Heart left ventricle (tissue), 16 donors: ENCODE measurements at regions of chr9 and their contacts with region 1.

Region 1: GRCh38 chr9:744790-745484 is 96.6 kb upstream of the DMRT1 start:
- DNase-seq: peak; percentile 83 to 91 (median 86)
- ATAC-seq: peak; percentile 94 to 97 (median 96)
- H3K4me3 ChIP-seq: no peak overlapping the region
- H3K27ac ChIP-seq: peak overlapping the region; percentile 20 to 81 (median 72)
- H3K4me1 ChIP-seq: peaks cover 0 to 50% (median 25%) of the 10 kb centered on the region in 12 donors
- H3K27me3 ChIP-seq: no peaks in the 10 kb centered on the region
- CTCF ChIP-seq: no peak
- POLR2A ChIP-seq: no peak

Region 2: DNA sequence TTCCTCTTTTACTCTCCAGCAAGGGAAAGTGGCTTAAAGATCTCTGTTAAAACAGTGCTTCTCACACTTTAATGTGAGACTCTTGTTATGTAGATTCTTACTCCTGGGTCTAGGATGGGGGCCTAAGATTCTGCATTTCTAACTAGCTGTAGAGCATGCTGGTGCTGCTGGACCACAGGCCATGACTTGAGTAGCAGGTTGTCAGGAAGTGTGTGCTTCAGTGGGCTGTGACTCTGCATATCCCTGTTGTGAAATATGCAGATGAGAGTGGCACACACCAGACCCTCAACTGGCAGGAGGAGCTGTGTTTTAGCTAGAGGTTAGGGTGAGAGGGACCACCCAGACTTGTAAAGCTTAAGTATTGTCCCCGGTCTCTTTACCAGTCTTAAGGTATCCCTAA is 94.6 kb before region 1 on chr9:
- intact Hi-C with region 1: loop called in 1 of 10 experiments (anchors 5 kb)
- DNase-seq: no peak
- ATAC-seq: peak in 1 of 4 donors; percentile 38
- H3K4me3 ChIP-seq: peak overlapping the region in 1 of 12 donors; percentile 20
- H3K27ac ChIP-seq: peak overlapping the region in 11 of 12 donors; percentile 11 to 60 (median 54)
- H3K4me1 ChIP-seq: peaks cover 8 to 78% (median 48%) of the 10 kb centered on the region in 12 donors
- H3K27me3 ChIP-seq: no peaks in the 10 kb centered on the region
- CTCF ChIP-seq: no peak
- POLR2A ChIP-seq: no peak

Region 3: GRCh38 chr9:726059-726458 is 18.9 kb before region 1 on chr9:
- intact Hi-C with region 1: no loop called
- DNase-seq: no peak
- ATAC-seq: no peak
- H3K4me3 ChIP-seq: no peak overlapping the region
- H3K27ac ChIP-seq: peak overlapping the region in 3 of 12 donors; percentile 2 to 47 (median 21)
- H3K4me1 ChIP-seq: peaks cover 0 to 34% (median 7%) of the 10 kb centered on the region in 12 donors
- H3K27me3 ChIP-seq: no peaks in the 10 kb centered on the region
- CTCF ChIP-seq: no peak
- POLR2A ChIP-seq: no peak

Region 4: DNA sequence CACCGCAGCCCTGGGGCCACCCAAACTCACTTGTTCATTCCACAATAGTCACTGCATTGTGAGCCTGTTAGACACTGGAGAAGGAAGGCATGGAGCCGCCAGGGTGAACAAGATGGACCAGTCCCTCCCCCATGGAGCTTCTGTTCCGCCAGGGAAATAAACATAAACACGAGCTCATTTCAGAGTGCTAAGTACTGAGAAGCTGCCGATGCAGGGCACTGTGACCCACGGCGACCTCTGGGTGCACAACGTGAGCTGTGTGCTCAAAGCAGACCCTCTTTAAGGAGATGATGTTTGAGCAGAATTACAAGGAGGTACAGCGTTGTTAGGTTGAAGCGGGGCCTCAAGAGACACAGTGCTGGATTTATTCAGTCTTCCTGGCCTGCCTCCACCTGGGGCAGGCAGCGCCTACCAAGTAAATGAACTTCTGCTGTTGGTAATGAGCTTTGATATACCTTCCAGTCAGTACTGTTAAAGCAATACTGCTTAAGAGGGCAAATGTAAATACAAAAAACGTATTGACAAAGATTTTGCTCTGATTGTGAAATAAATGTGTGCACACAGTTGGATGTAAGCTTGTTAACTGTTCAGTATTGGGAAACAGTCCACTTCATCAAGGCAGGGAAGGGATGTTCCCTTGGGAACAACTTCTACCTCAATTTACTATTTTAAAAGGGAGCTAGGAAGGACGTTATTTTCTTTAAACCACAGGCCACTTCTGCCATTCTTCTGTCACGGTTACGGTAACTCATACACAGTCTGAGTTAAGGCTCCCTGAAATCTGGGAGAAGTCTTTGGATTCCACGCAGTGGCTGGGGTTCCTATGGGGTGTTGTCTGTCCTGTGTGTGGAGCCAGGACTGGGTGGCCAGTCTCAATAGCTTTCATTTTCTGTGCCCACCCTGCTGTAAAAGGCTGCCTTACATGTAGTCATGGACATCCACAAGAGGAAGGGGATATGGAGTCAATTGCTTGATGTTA is 47.6 kb after region 1 on chr9:
- intact Hi-C with region 1: no loop called
- DNase-seq: no peak
- ATAC-seq: no peak
- H3K4me3 ChIP-seq: no peak overlapping the region
- H3K27ac ChIP-seq: no peak overlapping the region
- H3K4me1 ChIP-seq: no peaks in the 10 kb centered on the region
- H3K27me3 ChIP-seq: peaks cover 0 to 4% (median 0%) of the 10 kb centered on the region in 9 donors
- CTCF ChIP-seq: no peak
- POLR2A ChIP-seq: no peak